KBM-7 (cell line): ENCODE measurements at regions of chr3 and their contacts with region 1.

Region 1: DNA sequence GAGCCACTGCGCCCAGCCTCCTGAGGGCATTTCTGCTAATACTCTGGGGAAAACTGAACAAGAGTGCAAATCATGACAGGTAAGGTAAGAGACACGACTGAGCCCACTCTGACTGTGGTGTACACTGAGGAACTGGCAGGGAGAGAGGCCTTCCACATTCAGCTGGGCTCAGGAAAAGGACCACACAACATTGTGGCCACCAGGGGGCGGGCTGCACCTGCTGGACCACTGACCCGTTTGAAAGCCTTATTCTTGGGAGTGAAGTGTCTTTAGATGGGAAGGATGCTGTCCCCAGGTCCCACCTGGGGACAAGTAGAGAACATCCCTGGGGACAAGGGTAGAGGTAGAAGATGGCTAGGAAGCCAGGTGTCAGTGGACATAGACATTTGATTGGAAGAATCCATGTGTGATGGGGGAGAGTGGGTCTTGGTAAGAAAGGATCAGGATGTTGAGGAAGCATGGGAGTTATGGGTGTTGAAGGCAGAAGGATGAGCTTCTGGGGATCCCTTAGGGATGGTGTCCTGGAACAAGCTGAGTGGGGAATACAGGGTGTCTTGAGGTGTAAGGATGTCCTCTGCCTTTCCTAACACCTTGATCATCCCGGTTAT is 6.2 kb upstream of the CTDSPL start:
- DNase-seq: peak; percentile 84

Region 2: GRCh38 chr3:37197810-37198371 is 657.6 kb before region 1 on chr3:
- in situ Hi-C with region 1: no loop called
- DNase-seq: no peak

Region 3: GRCh38 chr3:37367436-37367835 is 488.0 kb before region 1 on chr3:
- in situ Hi-C with region 1: no loop called
- DNase-seq: no peak

Region 4: GRCh38 chr3:37974121-37975083 is 118.9 kb after region 1 on chr3:
- in situ Hi-C with region 1: loop called (anchors 10 kb)
- DNase-seq: peak; percentile 59

Region 5: GRCh38 chr3:38149708-38150107 is 294.2 kb after region 1 on chr3:
- in situ Hi-C with region 1: no loop called
- DNase-seq: peak; percentile 85

Region 6: GRCh38 chr3:38453075-38453912 is 597.8 kb after region 1 on chr3 and contains the start of gene ACVR2B:
- in situ Hi-C with region 1: no loop called
- DNase-seq: peak; percentile 64